ENCODE measurements at regions of chr22 and their contacts with region 1.

Region 1: DNA sequence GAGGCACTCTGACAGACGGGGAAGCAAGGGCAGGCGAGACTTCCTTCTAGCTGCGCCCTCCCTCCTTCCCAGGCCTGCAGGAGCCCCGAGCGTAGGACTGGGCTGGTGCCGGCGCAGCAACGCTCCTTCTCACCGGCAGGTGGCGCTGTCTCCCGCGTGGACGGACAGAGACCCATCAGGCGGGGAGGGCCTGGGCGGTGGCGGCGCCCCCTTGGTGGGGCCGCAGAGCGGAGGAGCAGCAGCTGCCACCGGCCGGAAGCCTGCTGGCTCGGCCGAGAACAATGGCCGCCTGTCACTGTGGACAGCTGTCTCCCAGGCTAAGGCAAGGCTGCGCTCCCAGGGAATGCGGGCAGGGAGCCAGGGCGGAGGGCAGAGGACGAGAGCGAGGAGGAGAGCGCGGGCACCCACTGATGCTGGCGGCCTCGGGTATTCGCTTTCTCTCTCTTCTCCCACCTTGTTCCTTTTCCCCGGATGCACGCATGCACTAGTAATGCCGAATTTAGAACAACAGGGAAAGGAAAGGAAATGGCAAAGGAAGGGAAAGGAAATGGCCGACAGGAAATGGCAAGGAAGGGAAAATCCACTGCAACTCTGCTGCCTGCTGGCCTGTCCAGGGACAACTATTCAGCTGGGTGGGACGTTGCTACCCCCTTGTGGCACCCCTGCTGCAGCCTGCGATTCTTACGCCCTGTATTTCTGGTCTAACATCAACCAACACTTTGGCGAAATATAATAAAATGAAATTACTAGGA is 14.4 kb downstream of the PPM1F start:
- DNase-seq: peak; percentile 99

Region 2: GRCh38 chr22:21666786-21667185 is 271.5 kb before region 1 on chr22:
- intact Hi-C with region 1: loop called (anchors 5 kb)
- DNase-seq: no peak

Region 3: DNA sequence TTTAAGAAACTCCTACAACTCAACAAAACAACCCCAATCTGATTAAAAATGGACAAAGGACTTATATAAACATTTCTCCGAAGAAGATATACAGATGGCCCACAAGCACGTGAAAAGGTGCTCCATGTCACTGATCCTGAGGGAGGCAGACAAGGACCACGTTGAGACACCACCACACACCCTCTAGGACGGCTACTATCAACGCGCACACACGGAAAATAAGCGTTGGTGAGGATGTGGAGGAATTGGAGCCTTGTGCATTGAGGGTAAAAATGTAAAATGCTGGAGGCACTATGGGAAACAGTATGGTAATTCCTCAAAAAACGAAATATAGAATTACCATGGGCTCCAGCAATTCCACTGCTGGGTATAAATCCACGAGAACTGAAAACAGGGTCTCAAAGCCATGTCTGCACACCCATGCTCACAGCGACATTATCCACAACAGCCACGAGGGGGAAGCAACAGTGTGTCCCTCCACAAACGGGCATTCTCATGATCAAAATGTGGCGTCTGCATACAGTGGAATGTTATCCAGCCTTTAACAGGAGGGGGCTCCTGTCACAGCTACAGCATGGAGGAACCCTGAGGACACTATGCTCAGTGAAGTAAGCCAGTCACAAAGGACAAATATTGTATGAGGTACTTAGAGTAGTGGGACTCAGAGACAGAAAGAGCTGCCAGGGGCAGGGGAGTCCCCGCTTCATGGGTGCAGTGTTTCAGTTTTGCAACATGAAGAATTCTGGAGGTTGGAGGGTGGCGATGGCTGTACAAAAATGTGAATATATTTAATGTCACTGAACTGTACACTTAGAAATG is 225.1 kb before region 1 on chr22:
- intact Hi-C with region 1: loop called (anchors 1 kb)
- DNase-seq: peak; percentile 81

Region 4: DNA sequence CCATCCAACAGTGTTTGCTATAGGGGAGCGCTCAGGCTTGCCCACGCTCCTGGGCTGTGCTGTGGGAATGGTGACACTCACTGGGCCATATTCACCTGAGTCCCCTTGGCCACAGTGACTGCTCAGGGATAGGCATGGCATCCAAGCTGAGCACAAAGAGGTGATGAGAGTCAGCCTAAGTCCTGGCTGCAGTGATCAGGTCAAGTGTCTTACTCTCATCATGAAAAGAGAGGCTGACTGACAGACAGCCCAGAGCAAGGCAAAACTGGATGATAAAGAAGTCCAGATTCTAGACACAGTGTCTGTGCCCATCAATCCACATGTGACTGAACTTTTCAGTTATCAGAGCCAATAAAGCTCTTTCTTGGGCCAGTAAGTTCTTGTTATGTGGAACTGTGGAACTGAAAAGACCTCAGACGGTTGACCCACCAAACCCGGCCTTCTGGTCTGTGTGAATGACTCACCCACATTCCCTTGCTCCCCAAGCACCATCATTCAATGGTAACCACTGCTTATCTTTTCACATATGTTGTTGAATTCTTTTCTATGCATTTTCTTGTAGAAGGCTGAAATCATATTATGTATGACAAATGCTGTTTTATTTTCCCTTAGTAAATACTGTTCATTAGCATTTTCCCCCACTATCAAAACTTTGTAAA is 159.4 kb before region 1 on chr22:
- intact Hi-C with region 1: loop called (anchors 1 kb)
- DNase-seq: no peak

Region 5: DNA sequence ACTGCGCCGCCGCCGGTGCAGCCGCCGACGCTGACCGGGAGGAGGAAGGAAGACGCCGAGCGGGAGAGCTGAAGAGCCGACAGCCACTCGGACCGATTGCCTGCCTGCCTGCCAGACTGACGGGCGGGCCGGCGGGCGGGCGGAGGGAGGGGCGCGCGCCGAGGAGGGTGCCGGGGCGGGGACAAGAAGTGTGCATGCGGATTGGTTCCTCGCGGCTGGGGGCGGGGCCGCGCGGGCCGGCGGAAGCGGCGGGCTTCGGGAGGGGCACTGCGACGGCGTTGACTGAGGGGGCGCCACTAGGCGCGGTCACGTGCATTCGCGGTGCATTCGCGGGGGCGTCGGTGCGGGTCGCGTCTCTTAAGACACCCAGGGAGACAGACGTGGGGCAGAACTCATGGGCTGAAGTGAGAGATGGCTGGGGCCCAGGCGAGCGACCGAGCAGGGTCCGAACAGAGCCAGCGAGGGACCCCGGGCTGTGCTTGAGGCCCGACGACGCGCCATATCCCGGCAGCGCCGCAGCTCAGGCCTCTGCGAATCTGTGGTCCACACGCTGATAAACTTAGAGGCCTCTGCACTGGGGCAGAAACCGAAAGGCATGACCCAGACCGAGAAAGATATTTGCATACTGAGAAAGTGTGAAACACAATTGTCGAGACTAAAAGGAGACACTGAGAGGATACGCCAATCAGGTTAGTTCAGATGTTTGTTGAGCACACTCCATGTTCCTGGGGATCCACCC is 70.5 kb before region 1 on chr22 and contains the start of gene MAPK1:
- intact Hi-C with region 1: loop called (anchors 5 kb)
- DNase-seq: peak; percentile 98
- total RNA-seq, gene MAPK1: 124 TPM

Region 6: DNA sequence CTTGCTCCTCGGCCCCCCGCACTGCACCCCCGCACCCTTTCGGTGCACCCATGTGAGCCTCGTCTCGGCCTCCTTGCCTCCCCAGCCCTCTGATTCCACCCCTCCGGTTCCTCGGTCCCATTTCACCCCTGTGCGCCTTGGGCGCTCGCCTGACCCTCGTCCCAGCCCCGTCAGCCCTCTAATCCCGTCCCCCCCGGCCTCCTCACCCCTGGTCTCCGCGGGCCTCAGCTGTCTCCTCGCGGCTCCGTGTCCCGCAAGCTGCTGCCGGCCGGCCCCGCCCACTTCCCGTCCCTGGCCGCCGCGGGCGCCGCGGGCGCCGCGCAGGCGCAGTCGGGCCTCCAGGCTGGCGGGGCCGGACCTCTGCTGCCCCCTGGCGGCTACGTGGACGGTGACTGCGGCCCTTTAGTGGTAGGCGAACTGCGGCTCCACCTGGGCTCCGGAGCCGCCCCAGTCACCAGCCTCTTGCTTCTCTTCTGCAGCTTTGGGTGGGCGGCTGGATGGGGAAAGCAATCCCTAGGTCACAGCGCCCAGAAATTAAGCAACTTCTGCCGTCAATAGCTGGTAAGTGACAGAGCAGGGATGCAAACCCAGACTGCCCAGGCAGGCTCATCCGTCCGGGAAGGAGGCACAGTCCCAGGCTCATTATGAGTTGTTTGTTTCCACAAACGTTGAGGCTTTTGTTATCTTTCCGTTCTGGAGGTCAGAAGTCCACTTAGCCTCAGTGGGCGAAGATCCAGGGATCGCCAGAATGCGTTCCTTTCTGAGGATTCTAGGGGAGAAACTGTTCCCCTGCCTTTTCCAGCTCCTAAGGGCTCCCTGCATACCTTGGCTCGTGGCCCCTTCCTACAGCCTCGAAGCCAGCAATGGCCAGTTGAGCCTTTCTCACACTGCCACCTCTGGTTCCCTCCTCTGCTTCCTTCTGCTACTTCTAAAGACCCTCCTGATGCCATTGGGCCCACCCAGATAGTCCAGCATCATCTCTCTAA is 14.6 kb after region 1 on chr22 and contains the start of gene PPM1F:
- intact Hi-C with region 1: loop called (anchors 2 kb)
- DNase-seq: peak; percentile 95
- total RNA-seq, gene PPM1F: 20.5 TPM

Measured in cardiac septum (tissue), 1 donor.